Activated CD8-positive, alpha-beta T cell treated with anti-CD3 and anti-CD28 coated beads for 36 hours (primary cell): ENCODE measurements at regions of chr4 and their contacts with region 1.

Region 1: GRCh38 chr4:77203380-77204197 is 46.6 kb downstream of the CCNG2 start:
- DNase-seq: peak; percentile 82
- ATAC-seq: peak; percentile 70
- H3K4me3 Mint-ChIP-seq: no peak overlapping the region
- H3K27ac Mint-ChIP-seq: no peak overlapping the region
- H3K4me1 Mint-ChIP-seq: peaks cover 13% of the 10 kb centered on the region
- H3K27me3 Mint-ChIP-seq: peaks cover 5% of the 10 kb centered on the region
- CTCF ChIP-seq: peak; percentile 74

Region 2: DNA sequence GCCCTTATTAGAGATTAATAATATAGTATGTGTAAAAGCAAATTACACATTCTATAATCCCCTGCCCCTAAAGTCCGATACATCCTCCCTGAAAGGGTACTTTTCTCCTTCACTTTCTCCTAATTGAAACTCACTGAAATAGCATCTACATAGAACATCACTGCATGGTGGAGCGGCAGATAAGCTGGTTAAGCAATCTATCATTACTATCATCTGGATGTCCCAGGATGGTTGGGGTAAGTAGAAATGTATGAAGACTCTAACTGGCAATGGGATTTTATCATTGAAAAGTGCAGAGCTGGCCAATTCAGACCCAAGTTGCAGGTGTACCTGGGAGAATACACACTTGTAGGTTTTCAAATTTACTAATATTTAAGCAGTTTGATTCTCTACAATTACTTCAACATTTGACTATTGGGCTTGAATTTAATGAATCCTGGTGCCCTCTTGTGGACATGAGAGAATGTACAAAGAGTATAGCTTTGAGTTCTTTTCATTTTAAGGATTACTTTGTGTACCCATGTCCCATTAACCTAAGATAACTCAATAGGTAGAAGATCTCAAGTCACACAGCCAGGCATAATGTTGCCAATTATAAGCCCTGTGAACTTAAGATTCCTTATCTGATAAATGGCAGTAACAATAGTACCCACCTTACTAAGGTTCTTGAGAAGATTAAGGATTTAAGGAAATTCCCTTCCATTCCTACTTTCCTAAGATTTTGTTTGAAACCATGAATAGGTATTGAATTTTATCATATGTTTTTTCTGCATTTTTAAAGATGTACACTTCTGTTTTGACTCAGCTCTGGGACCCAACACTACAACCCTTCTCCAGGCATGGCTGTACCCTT is 698.8 kb before region 1 on chr4:
- CTCF ChIA-PET with region 1: interaction called, 10 read pairs
- POLR2A ChIA-PET with region 1: no interaction called
- intact Hi-C with region 1: loop called (anchors 10 kb)
- DNase-seq: no peak
- ATAC-seq: peak; percentile 45
- H3K4me3 Mint-ChIP-seq: no peak overlapping the region
- H3K27ac Mint-ChIP-seq: no peak overlapping the region
- H3K4me1 Mint-ChIP-seq: no peaks in the 10 kb centered on the region
- H3K27me3 Mint-ChIP-seq: peaks cover 12% of the 10 kb centered on the region
- CTCF ChIP-seq: peak; percentile 75

Region 3: GRCh38 chr4:77052352-77052751 is 151.2 kb before region 1 on chr4:
- CTCF ChIA-PET with region 1: interaction called, 85 read pairs
- POLR2A ChIA-PET with region 1: no interaction called
- intact Hi-C with region 1: loop called (anchors 5 kb)
- DNase-seq: peak; percentile 73
- ATAC-seq: peak; percentile 39
- H3K4me3 Mint-ChIP-seq: no peak overlapping the region
- H3K27ac Mint-ChIP-seq: peak overlapping the region; percentile 80
- H3K4me1 Mint-ChIP-seq: peaks cover 11% of the 10 kb centered on the region
- H3K27me3 Mint-ChIP-seq: no peaks in the 10 kb centered on the region
- CTCF ChIP-seq: peak; percentile 60

Region 4: DNA sequence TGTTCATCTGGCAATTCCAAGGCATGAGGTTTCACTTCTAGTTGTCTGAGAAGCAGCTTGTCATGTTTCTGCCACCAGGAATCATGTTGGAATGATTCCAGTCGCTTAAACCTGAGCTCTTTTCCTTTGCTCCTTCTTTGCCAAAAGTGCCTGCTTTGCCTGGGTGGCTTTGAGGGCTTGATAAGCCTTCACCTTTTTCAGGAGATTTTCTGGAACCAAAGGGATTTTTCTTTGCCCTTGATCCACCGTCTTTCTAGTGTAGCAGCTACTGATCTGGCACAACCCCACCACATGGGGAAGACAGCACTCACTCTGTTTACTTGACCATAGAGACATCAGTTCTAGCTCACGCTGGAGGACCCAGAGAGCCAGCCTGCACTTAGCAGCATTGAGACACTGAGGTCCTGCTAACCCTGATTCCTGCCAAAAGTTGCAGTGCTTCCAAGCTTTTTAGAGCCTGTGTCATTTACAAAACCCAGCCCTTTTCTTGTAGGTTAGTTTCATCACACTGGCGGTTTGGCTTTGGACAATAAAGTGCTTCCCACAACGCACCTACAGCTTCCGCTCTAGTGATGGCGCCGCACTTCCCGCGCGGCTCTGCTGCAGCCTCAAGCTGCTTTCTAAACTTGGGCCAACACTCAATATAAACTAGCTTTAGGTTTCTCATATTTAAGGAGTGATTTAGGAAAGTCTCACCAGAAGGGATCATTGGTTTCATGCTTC is 120.5 kb before region 1 on chr4:
- CTCF ChIA-PET with region 1: interaction called, 13 read pairs
- POLR2A ChIA-PET with region 1: no interaction called
- intact Hi-C with region 1: no loop called
- DNase-seq: no peak
- ATAC-seq: no peak
- H3K4me3 Mint-ChIP-seq: no peak overlapping the region
- H3K27ac Mint-ChIP-seq: no peak overlapping the region
- H3K4me1 Mint-ChIP-seq: peaks cover 20% of the 10 kb centered on the region
- H3K27me3 Mint-ChIP-seq: no peaks in the 10 kb centered on the region
- CTCF ChIP-seq: no peak

Region 5: GRCh38 chr4:77126809-77127208 is 76.8 kb before region 1 on chr4:
- CTCF ChIA-PET with region 1: interaction called, 22 read pairs
- POLR2A ChIA-PET with region 1: no interaction called
- intact Hi-C with region 1: no loop called
- DNase-seq: no peak
- ATAC-seq: no peak
- H3K4me3 Mint-ChIP-seq: no peak overlapping the region
- H3K27ac Mint-ChIP-seq: no peak overlapping the region
- H3K4me1 Mint-ChIP-seq: peaks cover 12% of the 10 kb centered on the region
- H3K27me3 Mint-ChIP-seq: no peaks in the 10 kb centered on the region
- CTCF ChIP-seq: no peak

Region 6: GRCh38 chr4:77177199-77177598 is 26.4 kb before region 1 on chr4:
- CTCF ChIA-PET with region 1: interaction called, 21 read pairs
- POLR2A ChIA-PET with region 1: no interaction called
- intact Hi-C with region 1: no loop called
- DNase-seq: no peak
- ATAC-seq: no peak
- H3K4me3 Mint-ChIP-seq: no peak overlapping the region
- H3K27ac Mint-ChIP-seq: no peak overlapping the region
- H3K4me1 Mint-ChIP-seq: no peaks in the 10 kb centered on the region
- H3K27me3 Mint-ChIP-seq: peaks cover 2% of the 10 kb centered on the region
- CTCF ChIP-seq: no peak

Region 7: DNA sequence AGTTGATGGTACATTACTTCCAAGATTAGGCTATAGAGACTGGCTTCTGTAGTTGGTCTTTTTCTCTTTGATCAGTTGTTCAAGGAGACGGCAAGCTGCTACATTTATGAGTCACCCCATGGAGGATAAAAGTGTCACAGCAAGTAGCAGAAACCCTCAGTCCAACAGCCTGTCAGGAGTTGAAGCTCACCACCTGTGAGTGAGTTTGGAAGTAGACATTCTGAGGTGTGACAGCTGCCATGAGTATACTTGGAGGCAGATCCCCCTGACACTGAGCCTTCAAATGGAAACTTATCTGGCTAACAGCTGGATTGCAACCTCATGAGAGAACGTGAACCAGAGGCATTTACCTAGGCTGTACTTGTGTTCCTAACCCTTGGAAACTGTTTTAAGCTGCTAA is 21.4 kb after region 1 on chr4:
- CTCF ChIA-PET with region 1: interaction called, 15 read pairs
- POLR2A ChIA-PET with region 1: no interaction called
- intact Hi-C with region 1: no loop called
- DNase-seq: no peak
- ATAC-seq: no peak
- H3K4me3 Mint-ChIP-seq: no peak overlapping the region
- H3K27ac Mint-ChIP-seq: no peak overlapping the region
- H3K4me1 Mint-ChIP-seq: no peaks in the 10 kb centered on the region
- H3K27me3 Mint-ChIP-seq: peaks cover 8% of the 10 kb centered on the region
- CTCF ChIP-seq: no peak

Region 8: GRCh38 chr4:77263247-77263646 is 59.7 kb after region 1 on chr4:
- CTCF ChIA-PET with region 1: no interaction called
- POLR2A ChIA-PET with region 1: no interaction called
- intact Hi-C with region 1: no loop called
- DNase-seq: no peak
- ATAC-seq: no peak
- H3K4me3 Mint-ChIP-seq: no peak overlapping the region
- H3K27ac Mint-ChIP-seq: no peak overlapping the region
- H3K4me1 Mint-ChIP-seq: no peaks in the 10 kb centered on the region
- H3K27me3 Mint-ChIP-seq: peaks cover 2% of the 10 kb centered on the region
- CTCF ChIP-seq: no peak